ENCODE measurements at regions of chr3 and their contacts with region 1.

Region 1: DNA sequence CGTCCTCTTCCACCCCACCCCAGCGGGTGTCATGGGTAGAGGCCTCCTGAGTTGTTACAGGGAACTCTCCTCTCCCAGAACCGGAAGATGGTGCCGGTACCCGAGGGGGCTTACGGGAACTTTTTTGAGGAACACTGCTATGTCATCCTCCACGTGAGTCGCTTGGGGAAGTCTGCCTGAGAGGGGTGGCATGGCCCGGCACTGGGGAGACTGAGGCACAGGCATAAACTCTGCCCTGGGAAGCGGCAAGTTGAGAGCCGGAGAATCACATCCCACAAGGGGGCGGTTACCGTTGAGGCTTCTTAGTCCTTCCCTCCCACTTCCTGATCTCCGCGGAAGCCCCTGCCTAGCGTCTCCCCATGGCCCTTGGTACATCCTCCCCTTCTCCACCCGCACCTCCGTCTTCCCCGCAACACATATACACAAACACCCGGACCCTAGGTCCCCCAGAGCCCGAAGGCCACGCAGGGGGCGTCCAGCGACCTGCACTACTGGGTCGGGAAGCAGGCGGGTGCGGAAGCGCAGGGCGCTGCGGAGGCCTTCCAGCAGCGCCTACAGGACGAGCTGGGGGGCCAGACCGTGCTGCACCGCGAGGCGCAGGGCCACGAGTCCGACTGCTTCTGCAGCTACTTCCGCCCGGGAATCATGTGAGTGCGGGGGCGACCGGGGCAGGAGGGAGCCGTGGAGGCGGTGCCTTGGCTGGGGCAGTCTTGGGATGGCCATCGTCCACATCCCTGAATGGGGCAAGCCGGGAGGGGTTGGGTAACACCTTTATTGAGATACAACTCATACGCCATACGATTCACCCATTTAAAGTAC is 3.4 kb downstream of the VILL start:
- H3K4me3 Mint-ChIP-seq: peak overlapping the region; percentile 79
- H3K27ac Mint-ChIP-seq: peak overlapping the region; percentile 98
- H3K4me1 Mint-ChIP-seq: peaks cover 76% of the 10 kb centered on the region
- H3K27me3 Mint-ChIP-seq: no peaks in the 10 kb centered on the region

Region 2: GRCh38 chr3:37979541-37980461 is 14.2 kb before region 1 on chr3:
- intact Hi-C with region 1: loop called (anchors 2 kb)
- H3K4me3 Mint-ChIP-seq: no peak overlapping the region
- H3K27ac Mint-ChIP-seq: peak overlapping the region; percentile 58
- H3K4me1 Mint-ChIP-seq: peaks cover 31% of the 10 kb centered on the region
- H3K27me3 Mint-ChIP-seq: no peaks in the 10 kb centered on the region

Region 3: DNA sequence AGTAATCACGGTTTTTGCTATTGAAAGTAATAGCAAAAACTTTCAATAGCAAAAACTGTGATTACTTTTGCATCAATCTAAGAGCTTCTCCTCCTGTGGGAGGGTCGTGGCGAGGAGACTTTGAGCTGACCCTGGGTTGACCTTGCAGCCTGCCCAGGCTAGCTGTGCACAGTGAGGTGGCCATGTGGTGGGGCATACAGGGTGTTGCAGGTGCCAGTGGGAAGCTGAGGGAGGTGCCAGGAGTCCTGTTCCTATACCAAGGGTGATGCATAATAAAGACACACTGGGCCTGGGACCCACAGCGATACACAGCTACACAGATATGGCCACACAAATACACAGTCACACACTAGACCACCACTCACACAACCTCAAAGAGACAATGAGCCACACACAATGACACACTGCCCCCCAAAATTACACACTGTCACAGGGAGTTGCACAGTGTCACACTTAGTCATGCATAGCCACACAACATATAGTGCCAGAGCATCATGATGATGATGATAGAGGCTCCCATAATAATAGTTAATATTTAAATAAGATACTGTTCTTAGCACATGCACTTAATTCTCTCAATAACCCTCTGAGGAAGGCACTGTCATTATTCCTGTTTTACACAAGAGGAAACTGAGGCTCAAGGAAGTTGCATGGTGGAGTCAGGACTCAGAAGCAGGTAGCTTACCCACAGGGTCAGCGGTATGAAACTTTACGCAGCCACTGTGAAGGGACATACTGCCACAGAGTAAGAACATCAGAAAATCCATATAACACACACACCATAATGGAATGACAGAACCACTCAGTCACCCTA is 29.1 kb after region 1 on chr3:
- intact Hi-C with region 1: no loop called
- H3K4me3 Mint-ChIP-seq: no peak overlapping the region
- H3K27ac Mint-ChIP-seq: peak overlapping the region; percentile 100
- H3K4me1 Mint-ChIP-seq: peaks cover 43% of the 10 kb centered on the region
- H3K27me3 Mint-ChIP-seq: peaks cover 17% of the 10 kb centered on the region